PC-3 (cell line): ENCODE measurements at regions of chr11 and their contacts with region 1.

Region 1: GRCh38 chr11:100776212-100776896 is 89.3 kb downstream of the ARHGAP42 start:
- DNase-seq: peak; percentile 98
- ATAC-seq: peak; percentile 71
- H3K4me3 ChIP-seq: peak overlapping the region; percentile 51
- H3K27ac ChIP-seq: peak overlapping the region; percentile 93
- H3K4me1 ChIP-seq: peaks cover 36% of the 10 kb centered on the region
- H3K27me3 ChIP-seq: no peaks in the 10 kb centered on the region
- CTCF ChIP-seq: no peak

Region 2: DNA sequence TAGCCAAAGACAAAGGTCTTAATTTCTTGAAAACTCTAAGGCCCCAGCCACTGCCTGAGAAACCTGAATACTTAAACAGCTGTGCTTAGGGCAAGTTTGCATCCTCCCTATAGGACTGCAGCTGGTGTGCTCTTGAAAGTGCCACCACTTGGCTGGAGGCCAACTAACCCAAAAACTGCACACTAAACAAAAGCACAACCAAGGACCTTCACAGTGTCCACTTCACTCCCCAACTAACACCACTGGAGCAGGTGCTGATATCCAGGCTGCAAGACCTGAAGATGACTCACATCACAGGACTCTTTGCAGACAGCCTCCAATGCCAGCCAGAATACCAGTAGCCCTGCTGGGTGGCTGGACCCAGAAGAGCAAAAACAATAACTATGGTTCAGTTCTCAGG is 447.0 kb before region 1 on chr11:
- CTCF ChIA-PET with region 1: no interaction called
- POLR2A ChIA-PET with region 1: no interaction called
- intact Hi-C with region 1: no loop called
- DNase-seq: no peak
- ATAC-seq: no peak
- H3K4me3 ChIP-seq: no peak overlapping the region
- H3K27ac ChIP-seq: no peak overlapping the region
- H3K4me1 ChIP-seq: no peaks in the 10 kb centered on the region
- H3K27me3 ChIP-seq: peaks cover 26% of the 10 kb centered on the region; the same call in 1 of the 2 replicates
- CTCF ChIP-seq: no peak

Region 3: GRCh38 chr11:100575870-100576705 is 200.3 kb before region 1 on chr11:
- CTCF ChIA-PET with region 1: interaction called, 3 read pairs
- POLR2A ChIA-PET with region 1: no interaction called
- intact Hi-C with region 1: loop called (anchors 1 kb)
- DNase-seq: peak; percentile 78
- ATAC-seq: peak; percentile 61
- H3K4me3 ChIP-seq: peak overlapping the region; percentile 25; the same call in 1 of the 2 replicates
- H3K27ac ChIP-seq: no peak overlapping the region
- H3K4me1 ChIP-seq: peaks cover 31% of the 10 kb centered on the region
- H3K27me3 ChIP-seq: no peaks in the 10 kb centered on the region
- CTCF ChIP-seq: peak; percentile 97

Region 4: GRCh38 chr11:100687630-100688395 is 88.5 kb before region 1 on chr11:
- CTCF ChIA-PET with region 1: interaction called, 16 read pairs
- POLR2A ChIA-PET with region 1: interaction called, 85 read pairs
- intact Hi-C with region 1: loop called (anchors 1 kb)
- DNase-seq: peak; percentile 81
- ATAC-seq: peak; percentile 64
- H3K4me3 ChIP-seq: peak overlapping the region; percentile 87
- H3K27ac ChIP-seq: peak overlapping the region; percentile 89
- H3K4me1 ChIP-seq: peaks cover 64% of the 10 kb centered on the region
- H3K27me3 ChIP-seq: no peaks in the 10 kb centered on the region
- CTCF ChIP-seq: peak; percentile 77

Region 5: GRCh38 chr11:100808904-100809491 is 32.6 kb after region 1 on chr11:
- CTCF ChIA-PET with region 1: no interaction called
- POLR2A ChIA-PET with region 1: no interaction called
- intact Hi-C with region 1: loop called (anchors 1 kb)
- DNase-seq: peak; percentile 82
- ATAC-seq: peak; percentile 48
- H3K4me3 ChIP-seq: no peak overlapping the region
- H3K27ac ChIP-seq: peak overlapping the region; percentile 76
- H3K4me1 ChIP-seq: peaks cover 44% of the 10 kb centered on the region
- H3K27me3 ChIP-seq: no peaks in the 10 kb centered on the region
- CTCF ChIP-seq: no peak

Region 6: GRCh38 chr11:100855466-100856067 is 79.2 kb after region 1 on chr11:
- CTCF ChIA-PET with region 1: interaction called, 13 read pairs
- POLR2A ChIA-PET with region 1: interaction called, 5 read pairs
- intact Hi-C with region 1: loop called (anchors 1 kb)
- DNase-seq: peak; percentile 86
- ATAC-seq: peak; percentile 25; the same call in 1 of the 2 replicates
- H3K4me3 ChIP-seq: no peak overlapping the region
- H3K27ac ChIP-seq: peak overlapping the region; percentile 20
- H3K4me1 ChIP-seq: peaks cover 18% of the 10 kb centered on the region
- H3K27me3 ChIP-seq: no peaks in the 10 kb centered on the region
- CTCF ChIP-seq: peak; percentile 89